ENCODE measurements at regions of chr19 and their contacts with region 1.

Region 1: GRCh38 chr19:45862564-45863334 is at the start of gene SYMPK:
- DNase-seq: peak; percentile 99
- ATAC-seq: peak; percentile 96
- H3K4me3 Mint-ChIP-seq: peak within 1 kb of the TSS; percentile 87
- H3K27ac Mint-ChIP-seq: peak within 1 kb of the TSS; percentile 98
- H3K4me1 Mint-ChIP-seq: peaks cover 33% of the 10 kb centered on the region
- H3K27me3 Mint-ChIP-seq: peaks cover 24% of the 10 kb centered on the region
- total RNA-seq, gene SYMPK: 97.3 to 98.3 TPM

Region 2: DNA sequence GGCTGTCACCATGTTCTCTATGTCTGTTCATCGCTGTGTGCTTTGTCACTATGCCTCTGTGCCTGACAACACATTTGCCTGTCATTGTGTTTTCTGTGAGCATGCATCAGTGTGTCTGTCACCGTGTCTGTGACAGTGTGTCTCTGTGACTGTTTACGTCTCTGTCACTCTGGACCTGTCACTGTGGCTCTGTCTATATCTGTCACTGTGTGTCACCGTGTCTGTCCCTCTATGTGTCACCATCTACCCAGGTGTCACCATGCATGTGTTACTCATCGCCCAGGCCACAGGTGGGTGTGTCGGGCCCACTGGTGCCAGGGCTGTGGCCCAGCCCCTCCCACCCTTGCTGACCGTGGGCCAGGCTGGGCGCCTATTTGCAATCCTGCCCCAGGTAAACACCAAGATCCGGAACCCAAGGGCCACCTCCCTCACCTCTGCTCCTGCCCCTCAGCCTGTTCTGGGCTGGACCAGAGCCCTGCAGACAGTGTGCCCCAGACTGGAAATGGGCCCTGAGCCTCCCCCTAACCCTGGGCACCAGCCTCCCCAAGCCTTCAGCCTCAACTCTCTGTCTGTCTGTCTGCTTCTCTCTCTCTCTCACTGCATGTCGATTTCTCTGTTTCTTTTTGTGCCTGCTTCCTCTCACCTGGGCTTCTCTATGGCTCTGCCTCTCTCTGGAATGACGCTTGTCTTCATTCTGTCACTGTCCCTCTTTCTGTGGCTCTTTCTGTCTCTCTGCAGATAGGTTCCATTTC is 15.5 kb after region 1 on chr19:
- CTCF ChIA-PET with region 1: interaction called, 29 read pairs
- POLR2A ChIA-PET with region 1: no interaction called
- DNase-seq: no peak
- ATAC-seq: no peak
- H3K4me3 Mint-ChIP-seq: no peak overlapping the region
- H3K27ac Mint-ChIP-seq: no peak overlapping the region
- H3K4me1 Mint-ChIP-seq: peaks cover 25% of the 10 kb centered on the region
- H3K27me3 Mint-ChIP-seq: peaks cover 34% of the 10 kb centered on the region

Region 3: DNA sequence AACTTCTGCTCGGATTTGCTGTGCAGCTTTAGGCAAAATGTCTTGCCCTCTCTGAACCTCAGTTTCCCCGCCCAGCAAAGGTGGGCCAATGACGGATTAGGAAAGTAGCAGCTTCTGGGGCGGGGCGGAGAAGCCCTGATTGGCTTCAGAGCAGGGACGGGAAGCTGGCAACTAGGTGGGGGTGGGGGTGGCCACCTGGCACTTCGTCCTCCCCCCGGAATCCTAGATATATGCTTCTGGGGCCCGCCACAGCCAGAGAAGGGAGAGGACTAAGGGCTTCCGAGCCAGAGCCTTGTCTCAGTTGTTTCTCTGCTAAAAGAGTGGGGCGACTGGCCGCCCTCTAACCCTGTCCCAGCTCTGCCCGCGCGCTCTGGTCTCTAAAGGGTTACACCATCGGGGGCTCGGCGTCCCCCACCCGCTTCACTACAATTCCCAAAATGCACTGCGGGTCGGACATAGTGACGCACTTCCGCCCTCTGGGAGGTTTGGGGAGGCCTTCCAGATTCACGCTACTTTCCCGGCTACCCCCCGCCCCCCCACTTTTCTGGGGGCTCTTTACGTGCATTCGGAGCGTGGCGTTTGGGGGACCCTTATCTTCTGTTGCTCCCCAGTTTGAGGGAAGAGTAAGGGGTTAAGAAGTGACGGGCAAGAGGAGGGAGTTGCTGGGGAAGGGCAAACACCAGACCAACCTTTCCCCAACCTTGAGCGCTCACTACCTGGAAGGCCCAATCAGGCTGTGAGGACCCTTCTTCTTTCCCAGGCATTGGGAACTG is 23.9 kb after region 1 on chr19:
- CTCF ChIA-PET with region 1: interaction called, 29 read pairs
- POLR2A ChIA-PET with region 1: interaction called, 11 read pairs
- DNase-seq: peak; percentile 96
- ATAC-seq: peak; percentile 82
- H3K4me3 Mint-ChIP-seq: peak overlapping the region; percentile 90
- H3K27ac Mint-ChIP-seq: peak overlapping the region; percentile 97
- H3K4me1 Mint-ChIP-seq: peaks cover 29% of the 10 kb centered on the region
- H3K27me3 Mint-ChIP-seq: no peaks in the 10 kb centered on the region

Measured in activated CD8-positive, alpha-beta T cell treated with anti-CD3 and anti-CD28 coated beads, Interleukin-2, amount 10 ng/mL, durations not matched to agents 7 days and 5 days (primary cell).